B cell (primary cell): ENCODE measurements at regions of chr11 and their contacts with region 1.

Region 1: GRCh38 chr11:65637794-65638317 is at the start of gene SIPA1:
- DNase-seq: peak; percentile 88
- ATAC-seq: peak; percentile 32
- H3K4me3 ChIP-seq: peak within 1 kb of the TSS; percentile 70 to 97 (median 93)
- H3K4me3 Mint-ChIP-seq: peak within 1 kb of the TSS; percentile 99
- H3K27ac ChIP-seq: peak within 1 kb of the TSS; percentile 100
- H3K27ac Mint-ChIP-seq: peak within 1 kb of the TSS; percentile 98
- H3K4me1 ChIP-seq: peaks cover 37 to 66% of the 10 kb centered on the region in 2 donors
- H3K4me1 Mint-ChIP-seq: peaks cover 42% of the 10 kb centered on the region
- H3K27me3 ChIP-seq: no peaks in the 10 kb centered on the region
- H3K27me3 Mint-ChIP-seq: no peaks in the 10 kb centered on the region
- CTCF ChIP-seq: no peak
- total RNA-seq, gene SIPA1: 448 and 461 TPM in 2 replicates

Region 2: GRCh38 chr11:65575568-65576231 is 62.2 kb before region 1 on chr11 and contains the start of gene EHBP1L1:
- CTCF ChIA-PET with region 1: interaction called, 3 read pairs
- POLR2A ChIA-PET with region 1: interaction called, 5 read pairs
- intact Hi-C with region 1: loop called (anchors 1 kb)
- DNase-seq: peak; percentile 82
- ATAC-seq: peak; percentile 39
- H3K4me3 ChIP-seq: peak within 1 kb of the TSS; percentile 55 to 92 (median 70)
- H3K4me3 Mint-ChIP-seq: peak within 1 kb of the TSS; percentile 98
- H3K27ac ChIP-seq: peak within 1 kb of the TSS; percentile 92 to 94
- H3K27ac Mint-ChIP-seq: peak within 1 kb of the TSS; percentile 98
- H3K4me1 ChIP-seq: peaks cover 41 to 62% of the 10 kb centered on the region in 2 donors
- H3K4me1 Mint-ChIP-seq: peaks cover 61% of the 10 kb centered on the region
- H3K27me3 ChIP-seq: no peaks in the 10 kb centered on the region
- H3K27me3 Mint-ChIP-seq: no peaks in the 10 kb centered on the region
- CTCF ChIP-seq: no peak
- total RNA-seq, gene EHBP1L1: 202 and 224 TPM in 2 replicates

Region 3: DNA sequence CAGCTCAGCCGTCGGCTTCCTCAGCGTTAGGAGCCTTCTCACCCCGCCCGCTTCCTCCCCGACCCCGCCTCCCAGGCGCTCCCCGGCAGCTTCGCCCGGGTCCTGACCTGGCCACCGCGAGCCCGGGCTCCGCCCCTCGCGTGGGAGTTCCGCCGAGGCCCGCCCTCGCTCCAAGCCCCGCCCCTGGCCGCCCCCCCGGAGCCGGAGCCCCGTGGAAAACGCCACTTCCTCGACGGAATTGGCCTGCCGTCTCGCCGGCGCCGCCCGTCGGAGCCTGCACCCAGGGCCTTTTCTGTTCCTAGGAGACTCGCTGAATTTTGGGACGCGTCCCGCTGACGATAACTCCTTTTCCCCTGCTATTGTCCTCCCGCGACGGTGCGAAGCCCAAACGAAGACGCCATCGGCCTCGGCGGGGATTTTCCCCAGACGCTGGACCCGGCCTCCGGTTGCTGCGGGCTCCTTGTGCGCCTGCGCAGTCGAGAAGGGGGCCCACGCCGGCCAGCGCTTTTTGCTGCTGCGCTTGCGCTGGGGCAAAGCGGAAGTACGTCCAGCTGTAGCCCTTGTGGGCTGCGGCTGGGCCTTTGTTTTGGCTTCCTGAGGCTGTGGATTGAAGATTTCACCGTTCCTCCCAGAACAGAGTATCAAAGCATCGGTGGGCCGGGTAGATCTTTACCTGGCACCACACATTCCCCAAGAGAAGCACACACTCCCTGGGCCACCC is 14.8 kb after region 1 on chr11:
- CTCF ChIA-PET with region 1: interaction called, 50 read pairs
- POLR2A ChIA-PET with region 1: interaction called, 116 read pairs
- intact Hi-C with region 1: loop called (anchors 1 kb)
- DNase-seq: peak; percentile 98
- ATAC-seq: peak; percentile 89
- H3K4me3 ChIP-seq: peak overlapping the region; percentile 22 to 74 (median 69)
- H3K4me3 Mint-ChIP-seq: peak overlapping the region; percentile 96
- H3K27ac ChIP-seq: peak overlapping the region; percentile 90 to 93
- H3K27ac Mint-ChIP-seq: peak overlapping the region; percentile 98
- H3K4me1 ChIP-seq: peaks cover 22 to 44% of the 10 kb centered on the region in 2 donors
- H3K4me1 Mint-ChIP-seq: peaks cover 57% of the 10 kb centered on the region
- H3K27me3 ChIP-seq: no peaks in the 10 kb centered on the region
- H3K27me3 Mint-ChIP-seq: no peaks in the 10 kb centered on the region
- CTCF ChIP-seq: no peak

Region 4: DNA sequence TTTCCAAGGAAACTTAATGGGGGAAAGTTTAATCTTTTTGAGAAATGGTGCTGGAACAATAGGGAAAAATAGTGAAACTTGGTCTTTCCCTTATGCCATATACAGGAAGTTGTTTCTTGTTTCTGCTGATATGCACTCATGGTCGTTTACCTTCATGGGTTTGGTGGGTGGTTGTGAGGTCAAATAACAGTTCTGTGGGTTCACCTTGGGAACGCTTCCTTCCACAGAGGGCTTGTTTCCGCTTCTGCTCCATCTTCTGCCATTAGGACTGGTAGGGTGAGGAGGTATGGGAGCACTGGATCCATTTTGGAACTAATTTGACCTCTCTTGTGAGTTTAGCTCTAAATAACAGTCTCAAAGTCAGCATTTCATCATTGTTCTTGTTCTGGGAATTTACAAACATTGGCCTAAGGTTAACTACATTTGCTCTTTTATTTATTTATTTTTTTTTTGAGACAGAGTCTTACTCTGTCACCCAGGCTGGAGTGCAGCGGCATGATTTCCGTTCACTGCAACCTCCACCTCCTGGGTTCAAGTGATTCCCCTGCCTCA is 42.4 kb after region 1 on chr11:
- CTCF ChIA-PET with region 1: no interaction called
- POLR2A ChIA-PET with region 1: no interaction called
- intact Hi-C with region 1: no loop called
- DNase-seq: no peak
- ATAC-seq: no peak
- H3K4me3 ChIP-seq: no peak overlapping the region
- H3K4me3 Mint-ChIP-seq: no peak overlapping the region
- H3K27ac ChIP-seq: no peak overlapping the region
- H3K27ac Mint-ChIP-seq: no peak overlapping the region
- H3K4me1 ChIP-seq: no peaks in the 10 kb centered on the region
- H3K4me1 Mint-ChIP-seq: no peaks in the 10 kb centered on the region
- H3K27me3 ChIP-seq: no peaks in the 10 kb centered on the region
- H3K27me3 Mint-ChIP-seq: peaks cover 4% of the 10 kb centered on the region
- CTCF ChIP-seq: no peak